Sciatic nerve (tissue), 2 donors: ENCODE measurements at regions of chr7 and their contacts with region 1.

Region 1: DNA sequence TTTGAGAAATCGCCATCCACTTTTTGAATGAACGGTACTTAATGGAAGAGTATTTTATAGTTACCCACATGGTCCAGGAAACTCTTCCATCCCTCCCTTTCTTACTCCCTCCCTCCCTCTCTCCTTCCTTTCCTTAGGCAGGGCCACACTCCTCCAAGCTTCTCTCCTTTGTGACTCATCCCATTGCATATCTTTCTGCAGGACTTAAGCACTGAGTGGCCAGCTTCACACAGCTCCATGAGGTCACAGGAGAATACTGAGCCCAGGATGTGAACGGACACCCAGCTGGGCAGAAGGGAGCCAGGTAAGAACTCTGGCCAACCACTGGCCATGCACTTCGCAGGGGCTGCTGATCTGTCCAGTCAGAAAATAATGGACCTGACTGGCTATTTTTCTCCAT is 189.7 kb upstream of the ADCY1 start:
- DNase-seq: no peak
- ATAC-seq: no peak

Region 2: GRCh38 chr7:45196374-45196773 is 188.1 kb before region 1 on chr7:
- intact Hi-C with region 1: no loop called
- DNase-seq: no peak
- ATAC-seq: no peak

Region 3: GRCh38 chr7:45812946-45813345 is 428.4 kb after region 1 on chr7:
- intact Hi-C with region 1: no loop called
- DNase-seq: no peak
- ATAC-seq: no peak

Region 4: GRCh38 chr7:46178661-46179060 is 794.2 kb after region 1 on chr7:
- intact Hi-C with region 1: loop called (anchors 10 kb)
- DNase-seq: no peak
- ATAC-seq: no peak